ENCODE measurements at regions of chr11 and their contacts with region 1.

Region 1: GRCh38 chr11:12110201-12110713 is at the start of gene MICAL2:
- DNase-seq: peak; percentile 88
- H3K4me3 Mint-ChIP-seq: peak within 1 kb of the TSS; percentile 90
- H3K27ac Mint-ChIP-seq: peak within 1 kb of the TSS; percentile 99
- H3K4me1 Mint-ChIP-seq: peaks cover 60% of the 10 kb centered on the region
- H3K27me3 Mint-ChIP-seq: no peaks in the 10 kb centered on the region
- total RNA-seq, gene MICAL2: 736 TPM in 2 replicates

Region 2: DNA sequence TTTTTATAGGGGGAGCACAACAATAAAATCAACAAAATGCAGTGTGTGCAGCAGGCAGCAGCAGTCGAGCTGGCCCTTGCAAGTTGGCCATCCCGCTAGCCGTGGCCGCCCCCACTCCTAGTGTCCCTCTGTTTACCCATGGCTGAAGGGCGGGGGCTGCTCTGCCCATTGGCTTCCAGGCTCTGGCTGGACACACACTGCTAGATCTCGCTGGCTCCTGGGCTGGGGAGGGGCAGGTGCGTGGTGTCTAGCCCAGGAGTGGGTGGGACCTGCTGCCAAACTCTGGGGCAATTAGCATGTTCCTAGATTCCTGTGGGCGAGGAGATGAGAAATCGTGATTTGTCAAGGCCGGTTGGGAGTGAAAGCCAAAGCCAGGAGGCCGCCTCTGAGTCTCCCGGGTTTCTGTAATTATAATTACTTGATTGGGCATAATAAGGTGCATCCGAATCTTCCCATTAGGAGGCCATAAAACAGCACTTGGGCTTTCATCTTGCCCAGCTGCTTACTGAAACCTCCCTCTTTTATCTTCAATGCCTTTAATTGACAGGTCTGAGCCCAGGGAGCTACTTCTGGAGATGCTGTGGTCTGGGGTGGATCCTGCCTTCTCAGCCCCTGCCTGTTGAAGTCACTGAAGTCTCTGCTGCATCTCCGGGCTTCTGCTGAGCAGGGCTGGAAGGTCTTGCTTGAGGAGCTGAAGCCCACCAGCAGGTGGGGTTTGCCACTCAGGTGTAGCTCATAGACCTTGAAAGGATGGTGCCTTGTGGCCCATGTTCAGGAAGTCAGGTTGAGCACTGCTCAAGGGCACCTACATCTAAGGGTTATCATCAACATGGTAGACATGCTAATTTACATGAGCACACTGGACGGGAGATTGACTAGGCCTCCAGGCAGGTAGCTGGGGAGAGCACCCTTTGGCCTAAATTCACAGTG is 57.3 kb before region 1 on chr11:
- intact Hi-C with region 1: loop called (anchors 5 kb)
- DNase-seq: no peak
- H3K4me3 Mint-ChIP-seq: no peak overlapping the region
- H3K27ac Mint-ChIP-seq: no peak overlapping the region
- H3K4me1 Mint-ChIP-seq: peaks cover 14% of the 10 kb centered on the region
- H3K27me3 Mint-ChIP-seq: no peaks in the 10 kb centered on the region

Region 3: GRCh38 chr11:12128301-12128751 is 18.1 kb after region 1 on chr11:
- intact Hi-C with region 1: loop called (anchors 2 kb)
- DNase-seq: no peak
- H3K4me3 Mint-ChIP-seq: no peak overlapping the region
- H3K27ac Mint-ChIP-seq: peak overlapping the region; percentile 73
- H3K4me1 Mint-ChIP-seq: peaks cover 71% of the 10 kb centered on the region
- H3K27me3 Mint-ChIP-seq: no peaks in the 10 kb centered on the region

Region 4: GRCh38 chr11:12185914-12186313 is 75.7 kb after region 1 on chr11:
- intact Hi-C with region 1: loop called (anchors 2 kb)
- DNase-seq: no peak
- H3K4me3 Mint-ChIP-seq: no peak overlapping the region
- H3K27ac Mint-ChIP-seq: peak overlapping the region; percentile 44
- H3K4me1 Mint-ChIP-seq: peaks cover 71% of the 10 kb centered on the region
- H3K27me3 Mint-ChIP-seq: no peaks in the 10 kb centered on the region

Measured in activated T-helper 2 cell treated with anti-CD3 and anti-CD28 coated beads, Interferon-gamma antibody, Interleukin-2, Interleukin-4, amounts not matched to agents 10 μg/mL and 5 μg/mL and 100 μg/mL, durations not matched to agents 14 hours and 24 hours and 36 hours (primary cell).